HCT116 (cell line): ENCODE measurements at regions of chr5 and their contacts with region 1.

Region 1: GRCh38 chr5:120803282-120803681 is 339.2 kb downstream of the PRR16 start:
- DNase-seq: peak; percentile 8
- ATAC-seq: 0 out of 2 replicates have a peak, but pooled peaks have one; percentile 42
- H3K4me3 ChIP-seq: no peak overlapping the region
- H3K27ac ChIP-seq: no peak overlapping the region
- H3K4me1 ChIP-seq: no peaks in the 10 kb centered on the region
- H3K27me3 ChIP-seq: no peaks in the 10 kb centered on the region
- CTCF ChIP-seq: peak in 2 of 3 experiments; percentile 38 to 54; a peak in 3 of 6 replicates
- POLR2A ChIP-seq: no peak
- RAD21 ChIP-seq: peak; percentile 49

Region 2: DNA sequence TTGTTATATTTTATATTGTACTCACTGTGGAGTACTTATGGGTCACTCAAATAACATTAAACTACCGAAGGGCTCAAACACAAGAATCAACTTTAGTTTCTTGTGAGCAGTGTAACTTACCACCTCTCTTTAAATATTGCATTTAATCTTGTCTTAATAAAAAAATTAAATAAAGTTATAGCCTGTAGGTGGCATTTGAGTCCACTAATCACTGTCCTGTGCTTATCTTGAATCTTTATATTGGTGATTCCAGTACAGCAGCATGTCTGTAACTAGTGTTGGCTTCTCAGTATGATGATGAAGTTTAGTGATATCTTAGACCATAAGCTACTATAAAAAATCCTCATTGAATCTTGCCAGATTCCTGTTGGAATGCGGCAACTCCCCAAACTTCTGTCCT is 860.1 kb before region 1 on chr5:
- CTCF ChIA-PET with region 1: no interaction called
- POLR2A ChIA-PET with region 1: no interaction called
- RAD21 ChIA-PET with region 1: no interaction called
- intact Hi-C with region 1: loop called (anchors 5 kb)
- DNase-seq: no peak
- ATAC-seq: peak; percentile 55; the same call in 1 of the 2 replicates
- H3K4me3 ChIP-seq: no peak overlapping the region
- H3K27ac ChIP-seq: no peak overlapping the region
- H3K4me1 ChIP-seq: no peaks in the 10 kb centered on the region
- H3K27me3 ChIP-seq: no peaks in the 10 kb centered on the region
- CTCF ChIP-seq: peak in 1 of 3 experiments; percentile 37; a peak in 1 of 6 replicates
- POLR2A ChIP-seq: no peak
- RAD21 ChIP-seq: peak; percentile 58

Region 3: DNA sequence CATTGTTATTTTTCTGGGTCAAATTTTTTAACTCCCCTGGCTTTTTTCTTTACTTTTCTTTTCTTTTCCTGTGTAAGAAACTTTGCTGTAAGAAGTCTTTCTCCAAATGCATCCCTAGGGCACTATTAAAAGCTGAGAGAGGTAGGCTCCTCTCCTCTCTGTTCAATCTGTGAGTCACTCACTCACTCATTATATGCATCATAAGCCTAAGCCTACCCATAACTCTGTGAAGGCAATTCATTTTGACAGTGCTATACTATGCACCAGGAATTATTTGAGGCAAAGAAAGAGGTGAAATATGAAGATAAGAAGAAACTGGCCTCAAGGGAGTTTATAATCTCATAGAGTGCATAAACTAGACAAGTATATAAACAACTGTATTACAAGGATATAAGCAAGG is 407.1 kb before region 1 on chr5:
- CTCF ChIA-PET with region 1: no interaction called
- POLR2A ChIA-PET with region 1: no interaction called
- RAD21 ChIA-PET with region 1: no interaction called
- intact Hi-C with region 1: no loop called
- DNase-seq: no peak
- ATAC-seq: no peak
- H3K4me3 ChIP-seq: no peak overlapping the region
- H3K27ac ChIP-seq: no peak overlapping the region
- H3K4me1 ChIP-seq: no peaks in the 10 kb centered on the region
- H3K27me3 ChIP-seq: no peaks in the 10 kb centered on the region
- CTCF ChIP-seq: no peak
- POLR2A ChIP-seq: no peak
- RAD21 ChIP-seq: no peak

Region 4: DNA sequence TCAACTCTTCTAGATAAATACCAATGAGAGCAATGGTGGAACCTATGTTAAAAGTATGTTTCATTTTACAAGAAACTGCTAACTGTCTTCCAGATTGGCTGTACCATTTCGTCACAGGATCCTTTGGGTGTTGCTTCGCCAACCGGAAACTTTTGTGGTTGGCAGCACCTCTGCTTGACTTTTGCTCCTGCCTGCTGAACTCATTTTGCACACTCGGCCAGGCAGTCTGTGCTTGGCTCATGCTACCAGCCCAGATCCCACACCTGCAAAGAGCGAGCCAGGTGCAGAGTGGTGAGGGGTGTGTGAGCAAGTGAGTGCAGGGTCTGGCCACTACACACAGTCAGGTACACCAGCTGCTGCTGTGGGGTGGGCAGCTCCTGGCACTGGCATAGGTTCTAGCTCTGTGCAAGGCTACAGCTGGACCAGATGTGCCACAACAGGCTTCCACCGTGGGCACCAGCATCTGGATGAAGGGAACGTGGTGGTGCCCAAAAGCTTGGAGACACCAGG is 83.1 kb after region 1 on chr5:
- CTCF ChIA-PET with region 1: no interaction called
- POLR2A ChIA-PET with region 1: no interaction called
- RAD21 ChIA-PET with region 1: no interaction called
- intact Hi-C with region 1: no loop called
- DNase-seq: no peak
- ATAC-seq: no peak
- H3K4me3 ChIP-seq: no peak overlapping the region
- H3K27ac ChIP-seq: no peak overlapping the region
- H3K4me1 ChIP-seq: no peaks in the 10 kb centered on the region
- H3K27me3 ChIP-seq: no peaks in the 10 kb centered on the region
- CTCF ChIP-seq: no peak
- POLR2A ChIP-seq: no peak
- RAD21 ChIP-seq: no peak

Region 5: GRCh38 chr5:121870489-121870888 is 1067.2 kb after region 1 on chr5:
- CTCF ChIA-PET with region 1: no interaction called
- POLR2A ChIA-PET with region 1: no interaction called
- RAD21 ChIA-PET with region 1: no interaction called
- intact Hi-C with region 1: loop called (anchors 10 kb)
- DNase-seq: peak; percentile 4
- ATAC-seq: no peak
- H3K4me3 ChIP-seq: no peak overlapping the region
- H3K27ac ChIP-seq: no peak overlapping the region
- H3K4me1 ChIP-seq: no peaks in the 10 kb centered on the region
- H3K27me3 ChIP-seq: no peaks in the 10 kb centered on the region
- CTCF ChIP-seq: peak in 2 of 3 experiments; percentile 11 to 28; a peak in 2 of 6 replicates
- POLR2A ChIP-seq: no peak
- RAD21 ChIP-seq: peak; percentile 66